ENCODE measurements at regions of chr19 and their contacts with region 1.

Region 1: DNA sequence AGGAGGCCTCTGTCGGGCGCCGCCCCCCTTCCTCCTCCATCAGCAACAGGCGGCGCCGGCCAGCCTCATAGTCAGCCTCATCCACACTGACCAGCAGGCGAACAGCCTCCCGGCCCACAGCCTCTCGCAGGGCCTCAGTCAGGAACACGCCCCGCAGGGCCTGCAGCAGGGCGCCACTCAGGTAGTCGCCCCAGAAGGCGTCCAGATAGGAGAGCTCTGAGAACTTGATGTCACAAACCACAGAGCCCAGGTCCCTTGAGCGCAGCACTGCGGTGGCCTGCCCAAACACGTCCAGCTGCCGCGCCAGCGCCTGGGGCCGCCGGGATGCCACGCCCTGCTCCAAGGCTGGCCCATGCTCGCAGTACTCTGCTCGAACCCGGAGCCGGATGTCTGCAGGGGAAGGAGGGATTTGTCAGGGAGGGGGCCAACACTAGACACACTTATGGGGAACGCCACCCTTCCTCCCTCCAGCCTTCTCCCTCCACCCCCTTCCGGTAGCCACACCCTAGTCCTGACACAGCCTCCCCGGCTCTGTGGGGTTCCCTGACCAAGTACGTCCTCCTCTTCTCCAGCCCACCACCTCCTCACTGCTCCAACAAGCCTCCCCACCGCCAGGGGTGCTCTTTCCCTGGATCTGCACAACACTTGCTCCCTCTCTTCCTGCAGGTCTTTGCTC is 17.9 kb downstream of the DEDD2 start:
- DNase-seq: peak; percentile 75
- H3K4me3 Mint-ChIP-seq: peak overlapping the region; percentile 77
- H3K27ac Mint-ChIP-seq: peak overlapping the region; percentile 92
- H3K4me1 Mint-ChIP-seq: peaks cover 83% of the 10 kb centered on the region
- H3K27me3 Mint-ChIP-seq: no peaks in the 10 kb centered on the region

Region 2: DNA sequence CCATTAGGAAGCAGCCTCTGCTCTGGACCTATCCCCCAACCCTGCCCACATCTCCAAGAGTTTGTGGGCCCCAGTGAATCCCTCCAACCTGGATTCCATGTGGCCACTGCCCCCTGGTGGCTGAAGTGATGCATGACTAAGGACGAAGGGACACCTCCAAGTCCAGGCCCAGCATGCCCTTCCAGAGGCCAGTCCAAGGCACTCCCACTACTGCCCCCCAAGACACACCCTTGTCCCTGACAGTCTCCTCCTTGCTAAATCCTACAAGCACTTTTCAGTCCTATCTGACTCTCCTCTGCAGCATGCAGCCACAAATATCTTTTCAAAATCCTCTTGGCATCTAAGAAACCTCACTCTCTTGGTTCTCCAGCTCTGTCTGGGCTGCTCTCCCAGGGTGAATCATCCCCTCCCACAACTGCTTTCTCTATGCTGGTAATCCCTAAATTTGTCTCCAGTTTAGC is 15.1 kb before region 1 on chr19:
- intact Hi-C with region 1: loop called (anchors 1 kb)
- DNase-seq: peak; percentile 56
- H3K4me3 Mint-ChIP-seq: peak overlapping the region; percentile 19
- H3K27ac Mint-ChIP-seq: peak overlapping the region; percentile 54
- H3K4me1 Mint-ChIP-seq: peaks cover 45% of the 10 kb centered on the region
- H3K27me3 Mint-ChIP-seq: peaks cover 15% of the 10 kb centered on the region